ENCODE measurements at regions of chr6 and their contacts with region 1.

Region 1: GRCh38 chr6:85678602-85679444 is 36.1 kb upstream of the SYNCRIP start:
- DNase-seq: peak; percentile 98
- H3K4me3 Mint-ChIP-seq: peak overlapping the region; percentile 99
- H3K27ac Mint-ChIP-seq: peak overlapping the region; percentile 84
- H3K4me1 Mint-ChIP-seq: peaks cover 39% of the 10 kb centered on the region
- H3K27me3 Mint-ChIP-seq: no peaks in the 10 kb centered on the region

Region 2: DNA sequence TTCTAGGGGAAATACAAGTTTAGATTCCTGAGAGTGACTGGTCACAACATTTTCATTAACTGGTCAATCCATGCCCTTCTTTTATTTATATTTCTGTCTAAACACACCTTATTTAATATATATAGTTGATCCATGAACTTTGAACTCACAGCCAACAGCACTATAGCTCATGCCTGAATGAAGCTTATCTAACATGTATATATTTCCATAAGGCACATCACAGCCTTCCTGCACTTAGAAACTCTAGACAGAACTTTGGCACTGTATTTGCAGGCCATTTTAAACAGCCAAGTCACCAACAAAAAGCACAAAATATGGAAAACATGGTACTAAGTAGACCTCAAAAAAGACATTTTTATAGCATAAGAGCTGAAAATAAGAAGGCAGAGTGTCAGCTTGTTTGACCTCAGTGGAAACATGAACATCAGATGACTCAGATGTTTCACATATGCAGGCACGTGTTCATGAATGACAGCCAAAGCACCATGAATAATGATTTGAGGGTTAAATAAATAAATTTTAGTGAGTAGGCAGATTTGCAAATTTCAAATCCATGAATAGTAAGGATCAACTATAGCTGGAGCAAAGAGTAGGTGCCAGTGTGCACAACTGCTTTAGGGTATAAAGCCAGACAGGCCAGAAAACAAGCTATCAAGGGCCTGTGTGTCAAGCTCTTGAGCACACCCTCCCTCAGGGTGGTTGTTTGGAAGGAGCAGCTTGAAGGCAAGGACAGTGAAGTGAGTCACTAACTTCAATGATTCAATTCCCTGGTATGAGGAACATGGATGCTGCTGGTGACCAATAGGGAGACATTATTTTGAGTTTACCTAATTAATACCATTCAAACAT is 317.8 kb before region 1 on chr6:
- intact Hi-C with region 1: loop called (anchors 10 kb)
- DNase-seq: no peak
- H3K4me3 Mint-ChIP-seq: no peak overlapping the region
- H3K27ac Mint-ChIP-seq: peak overlapping the region; percentile 34
- H3K4me1 Mint-ChIP-seq: peaks cover 13% of the 10 kb centered on the region
- H3K27me3 Mint-ChIP-seq: no peaks in the 10 kb centered on the region

Region 3: DNA sequence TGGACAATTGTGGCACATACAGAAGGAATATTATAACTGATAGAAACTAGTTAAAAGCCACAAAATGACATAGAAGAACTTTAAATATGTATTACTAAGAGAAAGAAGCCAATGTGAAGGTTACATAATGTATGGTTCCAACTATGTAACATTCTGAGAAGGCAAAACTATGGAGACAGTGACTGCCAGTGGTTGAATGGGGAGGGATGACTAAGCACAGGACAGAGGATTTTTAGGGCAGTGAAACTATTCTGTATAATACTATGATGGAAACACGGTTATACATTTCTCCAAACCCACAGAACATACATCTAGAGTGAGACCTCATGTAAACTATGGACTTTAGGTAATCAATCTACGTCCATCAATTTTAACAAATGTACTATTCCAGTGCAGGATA is 58.5 kb before region 1 on chr6:
- intact Hi-C with region 1: loop called (anchors 10 kb)
- DNase-seq: no peak
- H3K4me3 Mint-ChIP-seq: no peak overlapping the region
- H3K27ac Mint-ChIP-seq: no peak overlapping the region
- H3K4me1 Mint-ChIP-seq: peaks cover 25% of the 10 kb centered on the region
- H3K27me3 Mint-ChIP-seq: no peaks in the 10 kb centered on the region

Region 4: GRCh38 chr6:85744433-85744970 is 65.7 kb after region 1 on chr6:
- intact Hi-C with region 1: no loop called
- DNase-seq: no peak
- H3K4me3 Mint-ChIP-seq: no peak overlapping the region
- H3K27ac Mint-ChIP-seq: no peak overlapping the region
- H3K4me1 Mint-ChIP-seq: no peaks in the 10 kb centered on the region
- H3K27me3 Mint-ChIP-seq: no peaks in the 10 kb centered on the region